Heart right ventricle (tissue), 16 donors: ENCODE measurements at regions of chr4 and their contacts with region 1.

Region 1: DNA sequence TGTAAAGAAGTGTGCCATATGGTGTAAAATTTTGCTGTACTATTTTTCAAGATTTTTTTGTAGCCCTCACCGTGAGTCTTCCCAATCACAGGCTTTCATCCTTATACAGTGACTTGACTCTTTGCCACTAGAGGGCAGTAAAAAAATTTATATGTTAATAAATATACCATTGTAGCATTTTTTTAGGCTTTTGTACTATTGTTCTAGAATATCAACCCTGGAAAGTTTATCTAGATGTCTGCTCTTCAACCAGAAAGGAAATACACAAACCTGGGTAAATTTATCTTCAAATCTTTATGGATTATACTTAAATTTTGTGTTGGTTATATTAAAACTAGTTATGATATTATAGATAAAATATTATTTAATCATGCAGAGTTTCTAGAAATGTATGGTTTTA is 235.3 kb downstream of the TENM3 start:
- DNase-seq: no peak
- ATAC-seq: no peak
- H3K4me3 ChIP-seq: no peak overlapping the region
- H3K27ac ChIP-seq: no peak overlapping the region
- H3K4me1 ChIP-seq: no peaks in the 10 kb centered on the region
- H3K27me3 ChIP-seq: no peaks in the 10 kb centered on the region
- CTCF ChIP-seq: peak; percentile 18 to 76 (median 69)

Region 2: DNA sequence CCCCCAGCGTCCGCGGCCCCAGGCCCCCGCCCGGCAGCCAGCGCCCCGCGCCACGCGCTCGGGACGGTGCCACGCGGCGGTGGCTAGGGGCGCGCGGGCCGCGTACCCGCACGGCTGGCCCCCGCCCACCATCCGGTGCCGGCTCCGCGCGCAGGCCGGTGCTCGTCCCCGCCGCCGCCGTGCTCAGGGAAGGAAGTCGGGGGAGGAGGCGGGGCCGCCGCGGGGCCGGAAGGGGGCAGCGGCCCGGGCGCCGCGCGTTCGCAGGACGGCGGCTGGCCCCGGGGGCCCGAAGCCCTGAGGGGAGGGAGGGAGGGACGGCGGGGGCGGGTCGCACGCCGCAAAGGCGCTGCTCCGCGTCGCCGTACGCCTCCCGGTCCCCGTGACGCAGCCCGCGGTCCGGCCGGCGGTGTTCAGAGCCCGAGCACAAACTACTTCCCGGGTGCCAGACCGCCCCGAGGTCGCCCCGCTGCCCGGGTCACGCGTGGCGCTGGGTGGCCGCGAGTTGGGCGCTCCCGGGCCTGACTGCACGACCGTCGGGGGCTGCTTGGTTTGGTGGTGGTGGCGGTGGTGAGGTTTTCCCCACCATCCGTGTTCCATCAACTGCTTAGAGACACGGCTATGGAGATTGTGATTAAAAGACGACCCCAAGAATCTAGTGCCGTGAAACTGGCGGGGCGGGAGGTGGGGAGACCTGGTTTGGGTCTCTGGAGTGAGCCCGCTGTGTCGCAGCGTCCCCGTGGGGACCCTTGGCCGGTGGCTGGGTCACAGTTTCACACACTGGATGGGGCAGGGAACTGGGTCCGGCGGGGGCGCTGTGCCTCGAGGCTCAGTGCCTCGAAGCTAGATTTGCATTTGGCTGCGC is 438.9 kb after region 1 on chr4 and contains the start of gene DCTD:
- intact Hi-C with region 1: loop called in 1 of 10 experiments (anchors 10 kb)
- DNase-seq: peak; percentile 84
- ATAC-seq: peak; percentile 83 to 94 (median 89)
- H3K4me3 ChIP-seq: peak within 1 kb of the TSS; percentile 71 to 99 (median 82)
- H3K27ac ChIP-seq: peak within 1 kb of the TSS; percentile 86 to 98 (median 97)
- H3K4me1 ChIP-seq: peaks cover 0 to 25% (median 15%) of the 10 kb centered on the region in 9 donors
- H3K27me3 ChIP-seq: peaks cover 0 to 2% (median 0%) of the 10 kb centered on the region in 7 donors
- CTCF ChIP-seq: peak in 7 of 9 donors; percentile 19 to 62 (median 39)
- total RNA-seq, gene DCTD: 33.9 to 53.1 (median 42.2) TPM

Region 3: GRCh38 chr4:182925298-182925738 is 446.8 kb after region 1 on chr4:
- intact Hi-C with region 1: loop called in 1 of 10 experiments (anchors 5 kb)
- DNase-seq: peak; percentile 37 to 59
- ATAC-seq: peak in 7 of 8 donors; percentile 58 to 92 (median 80)
- H3K4me3 ChIP-seq: no peak overlapping the region
- H3K27ac ChIP-seq: no peak overlapping the region
- H3K4me1 ChIP-seq: no peaks in the 10 kb centered on the region
- H3K27me3 ChIP-seq: peaks cover 0 to 8% (median 4%) of the 10 kb centered on the region in 7 donors
- CTCF ChIP-seq: peak in 7 of 9 donors; percentile 20 to 68 (median 56)